ENCODE measurements at regions of chr12 and their contacts with region 1.

Region 1: DNA sequence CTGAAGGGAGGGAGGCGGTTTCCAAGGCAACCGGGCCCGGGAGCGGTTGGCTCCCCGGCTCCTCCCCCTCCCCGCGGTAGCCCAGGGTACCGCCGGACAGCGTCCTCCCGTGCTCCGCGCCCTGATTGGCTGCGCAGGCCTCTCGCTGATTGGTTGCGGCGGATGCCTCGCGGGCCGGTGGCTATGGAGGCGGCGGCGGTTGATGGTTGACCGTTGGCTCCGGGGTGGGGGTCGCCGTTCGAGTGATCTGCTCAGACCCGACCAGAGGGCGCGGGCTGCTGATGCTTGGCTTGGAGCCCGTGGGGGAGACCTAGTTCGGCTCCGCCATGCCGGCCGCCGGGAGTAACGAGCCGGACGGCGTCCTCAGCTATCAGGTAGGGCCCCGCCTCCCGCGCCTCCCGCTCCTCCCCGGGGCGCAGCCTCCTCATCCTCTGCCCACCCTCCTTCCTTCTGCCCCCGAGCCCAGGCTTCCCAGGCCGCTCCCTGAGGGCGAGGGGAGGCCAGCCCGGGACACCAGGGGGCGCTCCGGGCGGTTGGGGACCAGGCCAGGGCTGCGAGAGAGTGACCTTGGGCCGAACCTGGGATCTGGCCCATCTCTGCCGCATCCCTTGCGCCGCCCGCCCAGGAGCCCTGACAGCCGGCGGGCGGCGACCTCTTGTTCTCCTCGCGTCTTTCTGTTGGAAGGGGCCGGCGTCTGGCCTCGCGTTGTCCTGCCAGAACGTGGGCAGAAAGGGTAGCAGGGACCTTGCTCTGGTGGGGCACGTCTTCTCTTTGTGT is at the start of gene SLC4A8:
- DNase-seq: peak; percentile 94 to 98 (median 97)
- H3K4me3 ChIP-seq: peak within 1 kb of the TSS; percentile 29 to 39 (median 35)
- H3K27ac ChIP-seq: no peak within 1 kb of the TSS
- H3K4me1 ChIP-seq: peaks cover 0 to 4% (median 0%) of the 10 kb centered on the region in 3 donors
- H3K27me3 ChIP-seq: no peaks in the 10 kb centered on the region
- CTCF ChIP-seq: peak; percentile 63
- total RNA-seq, gene SLC4A8: 2.4 TPM

Region 2: DNA sequence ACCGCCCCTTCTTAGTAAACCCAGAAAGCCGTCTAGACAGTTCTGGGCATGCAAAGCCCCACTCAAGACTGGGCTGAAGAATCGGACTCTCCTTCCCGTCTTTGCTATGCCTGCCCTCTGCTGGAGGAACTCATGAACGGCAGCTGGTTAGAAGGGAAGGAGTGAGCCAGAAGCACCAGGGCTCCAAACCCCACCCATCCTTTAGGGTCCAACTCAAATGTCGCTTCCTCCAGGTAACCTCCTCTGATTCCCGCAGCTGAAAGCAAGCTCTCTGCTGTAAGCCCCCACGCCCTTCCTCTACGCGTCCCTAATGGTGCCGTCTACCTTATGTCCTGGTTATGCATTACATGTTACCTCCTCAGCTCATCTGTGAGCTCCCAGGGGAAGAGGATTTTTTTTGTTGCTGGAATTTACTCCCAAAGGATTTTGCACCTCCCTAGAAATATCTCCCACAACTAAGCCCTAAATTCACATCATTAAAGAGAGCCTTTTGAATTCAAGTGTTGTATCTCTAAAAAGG is 107.2 kb after region 1 on chr12:
- intact Hi-C with region 1: loop called (anchors 10 kb)
- DNase-seq: peak in 4 of 5 donors; percentile 80 to 93 (median 82)
- H3K4me3 ChIP-seq: no peak overlapping the region
- H3K27ac ChIP-seq: no peak overlapping the region
- H3K4me1 ChIP-seq: peaks cover 0 to 8% (median 0%) of the 10 kb centered on the region in 3 donors
- H3K27me3 ChIP-seq: no peaks in the 10 kb centered on the region
- CTCF ChIP-seq: peak; percentile 94